ENCODE measurements at regions of chr14 and their contacts with region 1.

Region 1: DNA sequence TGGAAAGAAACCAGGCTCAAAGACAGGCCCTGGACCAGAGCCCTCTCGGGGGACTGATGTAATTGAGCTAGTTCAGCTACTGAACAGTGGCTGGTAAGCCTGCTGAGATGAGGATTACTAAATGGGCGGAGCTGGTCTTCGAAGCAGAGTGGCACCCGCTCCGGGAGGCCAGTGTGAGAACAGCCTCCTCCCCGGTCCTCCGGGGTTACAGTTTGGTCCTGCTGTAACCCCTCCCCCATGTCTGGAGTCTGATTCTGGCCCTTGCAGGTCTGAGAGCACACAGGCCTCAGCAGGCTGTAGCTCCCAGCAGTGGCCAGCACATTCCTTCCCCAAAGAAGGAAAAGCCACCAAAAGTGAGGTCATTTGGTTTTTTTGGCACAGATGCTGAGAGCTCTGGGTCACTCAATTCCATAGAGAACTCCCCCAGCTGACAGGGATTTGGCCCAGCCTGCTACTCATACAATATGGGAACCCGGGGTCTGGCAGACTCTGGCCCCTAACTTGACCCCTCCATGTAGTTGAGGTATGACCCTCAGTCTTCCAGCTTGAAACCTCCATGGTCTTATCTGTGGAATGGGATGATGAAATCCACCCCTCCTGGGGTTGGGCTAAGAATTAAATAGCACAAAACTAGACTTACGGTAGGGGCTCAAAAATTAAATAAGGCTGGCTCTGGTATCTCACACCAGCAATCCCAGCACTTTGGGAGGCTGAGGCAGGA is 39.0 kb downstream of the ACTN1 start:
- DNase-seq: peak; percentile 83 to 97
- H3K4me3 ChIP-seq: peak overlapping the region in 1 of 2 donors; percentile 47
- H3K27ac ChIP-seq: peak overlapping the region; percentile 93
- H3K4me1 ChIP-seq: peaks cover 62 to 96% of the 10 kb centered on the region in 2 donors
- H3K27me3 ChIP-seq: no peaks in the 10 kb centered on the region
- CTCF ChIP-seq: no peak

Region 2: DNA sequence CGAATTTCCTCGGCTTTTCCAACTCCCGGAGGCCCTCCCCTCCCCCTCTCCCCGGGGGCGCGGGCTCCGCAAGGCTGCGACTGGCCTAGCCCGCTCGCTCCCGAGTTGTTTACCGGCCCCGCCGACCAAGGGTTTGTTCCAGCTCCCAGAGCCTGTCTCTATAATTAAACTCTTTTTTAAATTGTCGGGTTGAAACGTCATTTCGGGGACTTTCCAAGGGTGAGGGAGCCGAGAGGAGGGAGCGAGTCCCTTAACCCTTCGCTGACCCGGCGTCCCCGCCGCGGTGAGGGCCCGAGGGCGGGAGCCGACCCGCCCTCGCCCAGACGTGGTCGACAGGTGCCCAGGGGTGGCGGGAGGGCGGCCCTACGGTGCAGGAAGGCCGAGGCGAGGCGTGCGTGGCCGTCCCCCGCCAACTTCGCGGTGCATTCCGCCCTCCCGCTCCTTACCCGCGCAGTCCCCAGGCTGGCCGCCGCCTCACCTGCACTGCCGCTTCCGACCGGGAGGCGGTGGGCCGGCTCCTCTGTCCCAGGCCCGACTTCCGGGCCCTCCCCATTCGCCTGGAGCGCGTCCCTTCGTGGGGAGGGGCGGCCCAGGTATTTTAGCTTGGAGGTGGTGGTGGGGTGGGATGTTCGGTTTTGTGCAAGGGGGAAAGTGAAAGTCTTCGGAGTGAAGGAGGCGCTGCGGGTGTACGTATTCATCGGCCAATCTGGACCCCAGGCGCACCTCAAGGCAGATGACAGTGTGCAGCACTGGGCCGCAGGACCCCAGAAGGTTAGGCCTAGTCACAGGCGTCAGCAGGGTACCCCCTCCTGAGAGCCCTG is 144.2 kb before region 1 on chr14:
- intact Hi-C with region 1: loop called (anchors 5 kb)
- DNase-seq: peak in 1 of 2 donors; percentile 92
- H3K4me3 ChIP-seq: peak overlapping the region; percentile 77 to 92
- H3K27ac ChIP-seq: peak overlapping the region; percentile 100
- H3K4me1 ChIP-seq: peaks cover 0 to 10% of the 10 kb centered on the region in 2 donors
- H3K27me3 ChIP-seq: no peaks in the 10 kb centered on the region
- CTCF ChIP-seq: peak; percentile 91 to 94 (median 92)

Region 3: DNA sequence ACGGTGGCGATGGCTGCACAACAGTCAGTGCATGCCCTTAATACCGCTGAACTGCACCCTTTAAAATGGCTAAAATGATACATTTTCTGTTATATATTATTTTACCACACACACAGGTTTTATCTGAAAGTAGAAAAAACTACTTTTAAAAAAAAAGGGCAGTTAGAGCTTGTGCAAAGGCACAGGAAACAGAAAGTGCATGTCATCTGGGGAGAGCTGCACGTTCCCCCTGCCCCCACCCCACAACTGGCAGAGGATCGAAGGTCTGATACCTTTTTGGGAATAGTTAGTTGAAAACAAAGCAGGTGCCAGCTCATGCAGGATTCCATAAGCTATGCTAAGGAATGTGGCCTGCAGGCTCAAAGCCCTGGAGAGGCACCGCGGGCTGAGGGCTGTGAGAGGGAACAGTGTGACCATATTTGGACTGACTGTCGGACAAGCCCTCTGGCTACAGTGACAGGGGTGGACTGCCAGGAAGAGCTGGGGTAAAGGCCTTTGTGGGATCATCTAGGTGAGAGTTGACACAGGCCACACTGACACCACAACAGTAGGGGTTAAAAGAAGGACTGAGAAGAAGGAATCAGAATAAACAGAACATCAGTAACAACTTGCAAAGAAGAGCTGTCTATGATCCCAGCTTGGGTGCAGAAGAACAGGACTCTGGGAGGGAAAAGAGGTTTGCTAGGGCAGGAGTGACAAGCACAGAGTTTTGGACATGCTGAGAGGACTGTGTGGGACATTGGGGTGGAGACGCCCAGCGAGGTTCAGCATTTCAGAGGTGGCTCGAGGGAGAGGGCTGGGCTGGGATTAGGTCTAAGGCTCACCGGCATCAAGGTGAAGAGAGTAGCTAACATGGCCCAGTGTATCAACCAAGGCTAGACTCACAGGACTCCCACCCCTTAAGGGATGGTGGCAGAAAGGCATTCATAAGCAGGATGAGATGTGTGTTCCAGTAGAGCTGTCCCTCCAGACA is 15.6 kb before region 1 on chr14:
- intact Hi-C with region 1: loop called (anchors 2 kb)
- DNase-seq: peak in 1 of 2 donors; percentile 89
- H3K4me3 ChIP-seq: no peak overlapping the region
- H3K27ac ChIP-seq: peak overlapping the region; percentile 89 to 93
- H3K4me1 ChIP-seq: peaks cover 20 to 73% of the 10 kb centered on the region in 2 donors
- H3K27me3 ChIP-seq: no peaks in the 10 kb centered on the region
- CTCF ChIP-seq: no peak

Measured in ascending aorta (tissue), 2 donors.